Heart right ventricle (tissue), 16 donors: ENCODE measurements at regions of chr2 and their contacts with region 1.

Region 1: GRCh38 chr2:113248997-113249770 is 29.5 kb downstream of the PAX8 start:
- DNase-seq: peak; percentile 79 to 80
- ATAC-seq: peak; percentile 57 to 89 (median 80)
- H3K4me3 ChIP-seq: no peak overlapping the region
- H3K27ac ChIP-seq: no peak overlapping the region
- H3K4me1 ChIP-seq: peaks cover 0 to 29% (median 3%) of the 10 kb centered on the region in 9 donors
- H3K27me3 ChIP-seq: peaks cover 0 to 2% (median 0%) of the 10 kb centered on the region in 7 donors
- CTCF ChIP-seq: peak; percentile 87 to 94 (median 91)

Region 2: DNA sequence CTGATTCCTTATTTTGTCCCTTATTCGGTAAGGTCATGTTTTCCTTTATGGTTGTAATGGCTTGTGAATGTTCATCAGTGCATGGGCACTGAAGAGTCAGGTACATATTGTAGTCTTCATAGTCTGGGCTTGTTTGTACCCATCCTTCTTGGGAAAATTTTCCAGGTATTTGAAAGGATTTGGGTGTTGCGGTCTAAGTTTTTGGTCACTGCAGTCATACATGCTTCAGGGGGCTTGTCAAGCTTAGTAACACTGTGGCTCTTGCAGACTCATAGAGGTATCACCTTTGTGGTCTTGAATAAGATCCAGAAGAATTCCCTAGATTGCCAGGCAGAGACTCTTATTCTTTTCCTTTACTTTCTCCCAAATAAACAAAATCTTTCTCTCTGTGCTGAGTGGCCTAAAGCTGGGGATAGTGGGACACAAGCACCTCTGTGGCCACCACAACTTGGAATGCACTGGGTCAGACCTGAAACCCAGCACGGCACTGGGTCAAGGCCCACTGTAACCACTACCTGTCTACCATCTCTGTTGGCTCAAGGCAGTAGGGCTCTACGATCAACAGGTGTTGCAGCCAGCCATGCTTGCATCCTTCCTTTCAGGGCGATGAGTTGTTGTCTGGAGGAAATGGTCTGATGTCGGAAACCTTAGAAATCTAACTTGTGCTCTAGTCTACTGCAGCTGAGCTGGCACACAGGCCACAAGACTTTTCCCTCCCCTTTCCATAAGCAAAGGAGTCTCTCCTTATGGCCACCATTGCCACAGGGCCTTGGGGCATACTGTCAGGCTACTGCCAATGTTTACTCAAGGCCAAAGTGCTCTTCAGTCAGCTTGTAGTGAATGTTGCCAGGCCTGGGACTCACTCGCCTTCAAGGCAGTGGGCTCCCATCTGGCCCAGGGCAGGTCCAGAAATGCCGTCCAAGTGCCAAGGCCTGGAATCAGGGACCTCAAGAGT is 100.3 kb before region 1 on chr2:
- intact Hi-C with region 1: loop called in 1 of 10 experiments (anchors 10 kb)
- DNase-seq: no peak
- ATAC-seq: no peak
- H3K4me3 ChIP-seq: no peak overlapping the region
- H3K27ac ChIP-seq: no peak overlapping the region
- H3K4me1 ChIP-seq: no peaks in the 10 kb centered on the region
- H3K27me3 ChIP-seq: peaks cover 0 to 5% (median 0%) of the 10 kb centered on the region in 7 donors
- CTCF ChIP-seq: no peak

Region 3: DNA sequence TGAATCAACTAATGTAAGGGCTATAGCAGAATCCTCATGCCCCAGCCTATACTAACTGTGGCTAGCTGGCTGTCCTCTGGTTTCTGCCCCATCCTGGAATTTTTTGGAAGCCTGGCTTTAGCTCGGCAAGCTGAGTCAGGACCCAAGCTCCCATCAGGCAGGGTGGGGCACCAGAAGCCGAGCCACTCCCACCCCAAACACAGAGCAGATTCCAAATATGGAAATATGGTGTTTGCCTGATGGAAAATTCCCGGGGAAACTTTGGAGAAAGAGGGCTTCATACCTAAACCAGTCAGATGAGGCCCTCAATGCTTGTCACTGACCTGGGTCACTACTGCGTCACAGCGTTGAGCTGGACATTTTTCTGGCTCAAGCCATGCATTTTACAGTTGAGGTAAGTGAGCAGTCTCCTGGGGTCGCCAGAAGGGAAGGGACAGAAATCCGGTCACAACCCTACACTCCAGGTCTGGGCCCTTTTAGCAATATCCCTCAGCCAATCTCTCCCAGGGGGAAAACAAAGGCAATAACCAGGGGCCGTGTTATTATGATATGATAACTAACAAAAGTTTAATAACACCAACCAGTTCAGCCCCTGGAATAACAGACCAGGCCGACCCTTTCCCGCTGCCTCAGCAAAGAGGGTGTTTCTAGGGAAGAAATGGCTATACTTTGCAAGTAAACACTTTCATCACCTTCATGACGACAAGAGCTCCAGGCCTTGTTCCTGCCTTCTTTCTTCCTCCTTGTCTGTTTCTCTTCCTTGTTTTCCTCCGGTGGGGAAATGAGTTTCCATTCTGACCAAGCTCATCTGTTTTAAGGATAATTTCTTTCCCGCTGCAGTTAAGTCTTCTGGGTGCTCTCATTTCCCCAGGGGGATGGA is 37.7 kb before region 1 on chr2:
- intact Hi-C with region 1: loop called in 3 of 10 experiments (anchors 2 to 5 kb)
- DNase-seq: no peak
- ATAC-seq: peak in 7 of 8 donors; percentile 39 to 74 (median 50)
- H3K4me3 ChIP-seq: peak overlapping the region in 4 of 10 donors; percentile 12 to 24 (median 16)
- H3K27ac ChIP-seq: peak overlapping the region in 9 of 10 donors; percentile 44 to 87 (median 68)
- H3K4me1 ChIP-seq: peaks cover 7 to 28% (median 24%) of the 10 kb centered on the region in 9 donors
- H3K27me3 ChIP-seq: no peaks in the 10 kb centered on the region
- CTCF ChIP-seq: no peak

Region 4: GRCh38 chr2:113370478-113371091 is 121.4 kb after region 1 on chr2:
- intact Hi-C with region 1: loop called (anchors 1 to 10 kb)
- DNase-seq: peak; percentile 42 to 63
- ATAC-seq: peak; percentile 77 to 95 (median 88)
- H3K4me3 ChIP-seq: no peak overlapping the region
- H3K27ac ChIP-seq: no peak overlapping the region
- H3K4me1 ChIP-seq: peaks cover 0 to 6% (median 0%) of the 10 kb centered on the region in 9 donors
- H3K27me3 ChIP-seq: peaks cover 0 to 11% (median 0%) of the 10 kb centered on the region in 7 donors
- CTCF ChIP-seq: peak; percentile 46 to 82 (median 71)